GM10248 (cell line): ENCODE measurements at regions of chr3 and their contacts with region 1.

Region 1: GRCh38 chr3:148796793-148797192 is 30.8 kb upstream of the CPB1 start:
- DNase-seq: no peak
- CTCF ChIP-seq: no peak

Region 2: GRCh38 chr3:148813972-148814371 is 17.2 kb after region 1 on chr3:
- CTCF ChIA-PET with region 1: interaction called, 14 read pairs
- POLR2A ChIA-PET with region 1: no interaction called
- DNase-seq: no peak
- CTCF ChIP-seq: no peak